ENCODE measurements at regions of chrX and their contacts with region 1.

Region 1: GRCh38 chrX:31279359-31279758 is 207.5 kb upstream of the FTHL17 start:
- DNase-seq: no peak
- ATAC-seq: peak in 2 of 4 donors; percentile 43 to 53
- H3K4me3 ChIP-seq: no peak overlapping the region
- H3K27ac ChIP-seq: no peak overlapping the region
- H3K4me1 ChIP-seq: peaks cover 0 to under 1% (median 0%) of the 10 kb centered on the region in 12 donors
- H3K27me3 ChIP-seq: peaks cover 0 to 2% (median 0%) of the 10 kb centered on the region in 9 donors
- CTCF ChIP-seq: peak in 9 of 12 donors; percentile 10 to 37 (median 19)
- POLR2A ChIP-seq: no peak

Region 2: GRCh38 chrX:31209005-31209612 is 70.2 kb before region 1 on chrX:
- intact Hi-C with region 1: no loop called
- DNase-seq: no peak
- ATAC-seq: no peak
- H3K4me3 ChIP-seq: no peak overlapping the region
- H3K27ac ChIP-seq: no peak overlapping the region
- H3K4me1 ChIP-seq: peaks cover 0 to 12% (median 0%) of the 10 kb centered on the region in 12 donors
- H3K27me3 ChIP-seq: no peaks in the 10 kb centered on the region
- CTCF ChIP-seq: no peak
- POLR2A ChIP-seq: no peak

Region 3: DNA sequence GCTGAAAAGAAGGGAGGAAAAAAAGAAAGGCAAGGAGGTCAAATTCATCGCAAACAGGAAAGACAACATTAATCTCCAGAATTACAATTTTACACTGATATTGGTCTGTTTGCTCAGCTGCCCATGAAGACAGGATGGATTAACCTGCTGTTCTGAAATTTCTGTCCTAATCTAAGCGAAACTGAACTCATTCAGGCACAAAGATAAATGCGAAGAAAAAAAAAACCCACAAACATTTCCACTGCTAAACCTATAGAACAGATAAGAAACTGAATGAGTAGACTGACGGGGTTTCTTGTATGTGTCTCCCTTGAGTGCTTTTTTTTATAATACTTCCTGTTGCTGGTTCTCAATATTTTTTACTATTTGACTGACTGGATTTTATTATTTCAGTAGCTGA is 44.3 kb after region 1 on chrX:
- intact Hi-C with region 1: loop called in 1 of 10 experiments (anchors 10 kb)
- DNase-seq: no peak
- ATAC-seq: no peak
- H3K4me3 ChIP-seq: no peak overlapping the region
- H3K27ac ChIP-seq: no peak overlapping the region
- H3K4me1 ChIP-seq: peaks cover 0 to 17% (median 0%) of the 10 kb centered on the region in 12 donors
- H3K27me3 ChIP-seq: no peaks in the 10 kb centered on the region
- CTCF ChIP-seq: no peak
- POLR2A ChIP-seq: no peak

Region 4: DNA sequence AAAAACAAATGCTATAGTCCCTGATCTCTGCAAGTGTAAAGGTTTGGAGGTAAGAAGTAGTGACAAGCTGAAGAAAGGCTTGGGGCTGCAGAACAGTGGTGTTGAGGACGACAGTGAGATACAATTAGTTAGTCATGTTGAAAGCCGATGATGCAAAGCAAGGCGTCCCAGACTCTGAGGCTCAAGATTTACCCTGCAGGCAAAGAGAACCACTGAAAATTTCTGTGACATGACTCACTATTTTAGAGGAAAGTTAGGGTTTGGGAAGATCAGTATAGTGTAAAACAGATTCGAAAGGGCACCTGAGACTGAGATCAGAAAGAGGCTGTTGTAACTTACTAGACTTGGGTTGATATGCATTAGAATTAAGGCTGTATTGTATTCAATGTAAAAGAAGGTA is 73.7 kb after region 1 on chrX:
- intact Hi-C with region 1: loop called in 1 of 10 experiments (anchors 10 kb)
- DNase-seq: no peak
- ATAC-seq: peak in 1 of 4 donors; percentile 36
- H3K4me3 ChIP-seq: no peak overlapping the region
- H3K27ac ChIP-seq: no peak overlapping the region
- H3K4me1 ChIP-seq: peaks cover 0 to 6% (median 0%) of the 10 kb centered on the region in 12 donors
- H3K27me3 ChIP-seq: no peaks in the 10 kb centered on the region
- CTCF ChIP-seq: no peak
- POLR2A ChIP-seq: no peak

Region 5: DNA sequence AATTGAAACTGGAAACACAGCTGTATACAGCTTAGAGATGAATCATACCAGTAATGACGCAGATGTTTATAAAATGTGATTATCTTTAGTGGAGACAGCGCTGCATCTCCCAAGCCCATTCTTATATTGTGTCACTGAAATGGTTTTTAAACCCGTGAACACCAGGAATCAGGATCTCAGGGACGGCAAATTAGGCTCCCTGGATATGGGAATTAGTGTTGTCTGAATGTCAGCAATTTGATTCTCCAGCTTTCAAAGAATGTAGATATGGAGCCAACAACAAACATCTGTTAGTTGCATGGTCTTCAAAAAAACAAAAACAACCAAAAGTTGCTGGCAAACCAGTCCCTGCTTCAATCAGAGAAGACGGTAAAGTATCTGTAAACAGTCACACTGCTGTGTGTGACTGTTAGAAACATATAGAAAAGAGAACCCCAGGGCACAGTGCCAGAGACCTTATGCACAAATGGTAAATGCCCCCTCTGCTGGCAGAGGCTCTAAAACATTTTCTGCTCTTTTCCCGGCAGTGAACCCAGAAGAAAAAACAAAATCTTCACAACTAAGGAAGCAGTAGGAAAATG is 144.3 kb after region 1 on chrX:
- intact Hi-C with region 1: loop called in 2 of 10 experiments (anchors 10 kb)
- DNase-seq: peak in 3 of 5 donors; percentile 29 to 44 (median 31)
- ATAC-seq: peak in 1 of 4 donors; percentile 34
- H3K4me3 ChIP-seq: peak overlapping the region in 5 of 12 donors; percentile 1 to 28 (median 26)
- H3K27ac ChIP-seq: peak overlapping the region in 4 of 12 donors; percentile 11 to 28 (median 18)
- H3K4me1 ChIP-seq: peaks cover 0 to 11% (median 0%) of the 10 kb centered on the region in 12 donors
- H3K27me3 ChIP-seq: no peaks in the 10 kb centered on the region
- CTCF ChIP-seq: peak in 9 of 12 donors; percentile 10 to 48 (median 29)
- POLR2A ChIP-seq: no peak